ENCODE measurements at regions of chr2 and their contacts with region 1.

Region 1: GRCh38 chr2:29014811-29015421 is 33.8 kb downstream of the TOGARAM2 start:
- DNase-seq: peak; percentile 71 to 88
- ATAC-seq: peak; percentile 9 to 20
- H3K4me3 ChIP-seq: peak overlapping the region; percentile 10 to 57 (median 48)
- H3K27ac ChIP-seq: peak overlapping the region; percentile 93 to 99 (median 96)
- H3K4me1 ChIP-seq: peaks cover 66 to 69% of the 10 kb centered on the region in 2 donors
- H3K27me3 ChIP-seq: no peaks in the 10 kb centered on the region
- CTCF ChIP-seq: no peak
- POLR2A ChIP-seq: peak; percentile 12 to 47

Region 2: GRCh38 chr2:28821295-28821958 is 193.5 kb before region 1 on chr2:
- in situ Hi-C with region 1: no loop called
- intact Hi-C with region 1: loop called (anchors 2 kb)
- DNase-seq: peak; percentile 12 to 28
- ATAC-seq: peak; percentile 70 to 94
- H3K4me3 ChIP-seq: no peak overlapping the region
- H3K27ac ChIP-seq: no peak overlapping the region
- H3K4me1 ChIP-seq: no peaks in the 10 kb centered on the region
- H3K27me3 ChIP-seq: no peaks in the 10 kb centered on the region
- CTCF ChIP-seq: peak; percentile 67 to 80 (median 74)
- POLR2A ChIP-seq: no peak

Region 3: DNA sequence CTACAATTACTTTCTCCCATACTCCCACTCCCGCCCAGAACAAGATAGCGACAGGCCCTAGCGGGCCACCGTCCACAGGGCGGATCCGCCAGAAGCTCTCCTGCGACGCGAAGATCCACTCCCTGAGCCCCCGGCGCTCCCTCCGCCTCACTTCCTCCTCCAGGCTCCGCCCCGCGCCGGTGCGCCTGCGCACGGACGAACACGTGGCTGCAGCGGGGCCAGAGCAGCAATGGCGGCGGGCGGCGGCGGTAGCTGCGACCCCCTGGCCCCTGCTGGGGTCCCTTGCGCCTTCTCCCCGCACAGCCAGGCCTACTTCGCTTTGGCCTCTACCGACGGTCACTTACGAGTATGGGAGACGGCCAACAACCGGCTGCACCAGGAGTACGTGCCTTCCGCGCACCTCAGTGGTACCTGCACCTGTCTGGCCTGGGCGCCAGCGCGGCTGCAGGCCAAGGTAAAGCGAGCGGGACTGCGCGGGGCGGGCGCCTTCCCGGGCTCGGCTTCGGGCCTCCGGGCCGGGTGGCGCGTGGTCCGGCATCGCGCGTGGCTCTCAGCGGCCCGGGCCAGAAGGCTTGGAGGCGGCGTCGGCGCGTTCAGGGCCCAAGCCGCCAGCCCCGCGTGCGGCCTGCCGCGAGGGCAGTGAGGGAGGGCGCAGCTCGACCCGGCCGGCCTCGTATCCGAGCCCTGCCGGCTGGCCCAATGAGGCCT is 120.3 kb before region 1 on chr2 and contains the start of gene WDR43:
- in situ Hi-C with region 1: no loop called
- intact Hi-C with region 1: loop called (anchors 5 kb)
- DNase-seq: peak; percentile 96 to 97
- ATAC-seq: peak; percentile 89 to 91
- H3K4me3 ChIP-seq: peak within 1 kb of the TSS; percentile 78 to 99 (median 88)
- H3K27ac ChIP-seq: peak within 1 kb of the TSS; percentile 88 to 94 (median 91)
- H3K4me1 ChIP-seq: peaks cover 30 to 41% of the 10 kb centered on the region in 2 donors
- H3K27me3 ChIP-seq: no peaks in the 10 kb centered on the region
- CTCF ChIP-seq: no peak
- POLR2A ChIP-seq: peak; percentile 94 to 95
- total RNA-seq, gene WDR43: 73.5 to 105 (median 81.1) TPM

Region 4: DNA sequence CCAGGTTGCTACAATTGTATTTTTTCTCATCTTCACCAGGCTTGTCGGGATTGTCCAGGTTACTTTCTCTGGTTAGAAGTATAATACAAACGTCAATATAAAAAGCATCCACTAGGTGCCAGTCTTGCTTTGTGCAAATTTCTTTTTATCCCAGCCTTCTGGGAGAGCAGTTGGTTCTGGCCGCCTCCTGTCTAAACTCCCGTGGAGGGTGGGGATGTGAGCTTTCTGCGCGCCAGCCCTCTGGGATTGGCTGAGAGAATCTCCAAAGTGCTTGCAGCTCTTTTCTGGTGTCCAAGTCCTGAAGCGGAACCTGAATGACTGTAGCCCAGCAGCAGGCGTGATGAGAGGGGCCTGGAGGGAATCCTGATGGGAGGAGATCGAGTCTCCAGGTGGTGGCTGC is 56.2 kb before region 1 on chr2:
- in situ Hi-C with region 1: loop called in 3 of 4 experiments (anchors 5 to 10 kb)
- intact Hi-C with region 1: loop called (anchors 1 kb)
- DNase-seq: peak; percentile 74 to 84
- ATAC-seq: peak; percentile 87 to 88
- H3K4me3 ChIP-seq: peak overlapping the region in 2 of 4 donors; percentile 2 to 6
- H3K27ac ChIP-seq: peak overlapping the region; percentile 67 to 86 (median 80)
- H3K4me1 ChIP-seq: peaks cover 6 to 10% of the 10 kb centered on the region in 2 donors
- H3K27me3 ChIP-seq: no peaks in the 10 kb centered on the region
- CTCF ChIP-seq: peak; percentile 75 to 86 (median 81)
- POLR2A ChIP-seq: peak; percentile 52 to 53

Region 5: DNA sequence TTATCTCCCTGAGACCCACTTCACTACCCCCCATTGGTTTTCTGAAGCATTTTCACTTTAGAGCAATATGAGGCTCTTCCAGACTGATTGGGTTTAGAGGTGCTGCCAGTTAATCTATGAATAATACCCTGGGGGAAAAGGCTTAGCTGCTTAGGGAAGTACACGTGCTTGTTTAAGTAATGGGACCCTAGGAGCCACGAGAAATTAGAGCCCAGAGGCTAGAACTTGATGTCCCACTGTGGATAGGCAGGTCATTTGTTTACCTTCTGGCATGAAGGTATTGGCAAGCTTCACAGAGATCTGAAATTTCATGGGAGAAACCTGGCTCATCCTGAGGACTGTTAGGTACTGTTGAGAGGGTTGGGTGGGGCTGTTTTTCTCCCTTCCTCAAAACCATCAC is 160.0 kb after region 1 on chr2:
- in situ Hi-C with region 1: no loop called
- intact Hi-C with region 1: loop called (anchors 5 kb)
- DNase-seq: peak; percentile 74 to 75
- ATAC-seq: peak; percentile 96 to 97
- H3K4me3 ChIP-seq: peak overlapping the region in 3 of 4 donors; percentile 38 to 50 (median 46)
- H3K27ac ChIP-seq: peak overlapping the region; percentile 74 to 82 (median 80)
- H3K4me1 ChIP-seq: peaks cover 7 to 13% of the 10 kb centered on the region in 2 donors
- H3K27me3 ChIP-seq: no peaks in the 10 kb centered on the region
- CTCF ChIP-seq: no peak
- POLR2A ChIP-seq: peak in 1 of 2 donors; percentile 79

Measured in gastrocnemius medialis (tissue), 4 donors.